Activated CD4-positive, alpha-beta T cell treated with anti-CD3 and anti-CD28 coated beads, Interleukin-2, amount 10 ng/mL, durations not matched to agents 24 days and 14 days (primary cell): ENCODE measurements at regions of chr3 and their contacts with region 1.

Region 1: DNA sequence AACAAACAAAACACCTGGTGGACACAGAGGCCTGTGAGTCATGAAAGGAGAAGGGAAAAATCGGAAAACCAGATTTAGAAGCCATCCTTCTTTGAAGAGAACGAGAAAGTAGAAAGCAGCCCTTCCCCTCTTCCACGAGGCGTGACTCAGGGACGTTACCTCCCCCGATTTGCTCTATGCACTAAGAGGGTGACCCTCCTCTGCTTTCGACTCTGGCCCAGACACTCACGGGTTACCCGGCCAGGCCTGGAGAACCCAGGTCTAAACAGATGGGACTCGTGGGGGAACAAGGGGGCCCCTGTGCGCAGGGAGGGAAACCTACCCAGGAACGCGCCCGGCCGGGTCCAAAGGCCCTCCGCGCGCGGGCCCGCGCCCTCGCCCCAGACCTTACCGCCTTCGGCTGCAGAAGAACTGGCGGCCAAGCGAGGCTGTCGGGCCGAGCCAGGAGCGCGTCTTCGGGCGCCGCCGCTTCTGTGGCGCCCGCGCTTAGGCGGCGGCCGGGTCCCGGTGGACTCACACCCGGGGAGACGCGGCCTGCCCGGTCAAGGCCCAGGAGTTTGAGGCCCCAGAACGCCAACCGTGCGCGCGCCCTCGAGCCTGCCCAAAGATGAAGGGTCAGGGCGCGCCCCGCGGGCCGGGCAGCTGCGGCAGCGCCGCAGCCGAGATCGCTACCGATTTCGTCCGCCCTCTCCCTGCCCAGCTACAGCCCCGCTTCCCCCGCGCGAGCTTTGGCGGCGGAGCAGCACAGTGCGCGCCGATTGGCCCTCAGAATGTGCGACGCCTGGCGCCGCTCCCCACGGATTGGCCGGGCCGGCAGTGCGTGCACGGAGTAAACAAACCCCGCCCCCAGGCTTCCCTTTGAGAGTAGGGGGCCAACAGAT is at the start of gene TFDP2:
- DNase-seq: peak; percentile 97
- H3K4me3 Mint-ChIP-seq: peak within 1 kb of the TSS; percentile 83
- H3K27ac Mint-ChIP-seq: peak within 1 kb of the TSS; percentile 73
- H3K4me1 Mint-ChIP-seq: peaks cover 16% of the 10 kb centered on the region
- H3K27me3 Mint-ChIP-seq: peaks cover 4% of the 10 kb centered on the region
- total RNA-seq, gene TFDP2: 22.0 and 22.1 TPM in 2 replicates

Region 2: DNA sequence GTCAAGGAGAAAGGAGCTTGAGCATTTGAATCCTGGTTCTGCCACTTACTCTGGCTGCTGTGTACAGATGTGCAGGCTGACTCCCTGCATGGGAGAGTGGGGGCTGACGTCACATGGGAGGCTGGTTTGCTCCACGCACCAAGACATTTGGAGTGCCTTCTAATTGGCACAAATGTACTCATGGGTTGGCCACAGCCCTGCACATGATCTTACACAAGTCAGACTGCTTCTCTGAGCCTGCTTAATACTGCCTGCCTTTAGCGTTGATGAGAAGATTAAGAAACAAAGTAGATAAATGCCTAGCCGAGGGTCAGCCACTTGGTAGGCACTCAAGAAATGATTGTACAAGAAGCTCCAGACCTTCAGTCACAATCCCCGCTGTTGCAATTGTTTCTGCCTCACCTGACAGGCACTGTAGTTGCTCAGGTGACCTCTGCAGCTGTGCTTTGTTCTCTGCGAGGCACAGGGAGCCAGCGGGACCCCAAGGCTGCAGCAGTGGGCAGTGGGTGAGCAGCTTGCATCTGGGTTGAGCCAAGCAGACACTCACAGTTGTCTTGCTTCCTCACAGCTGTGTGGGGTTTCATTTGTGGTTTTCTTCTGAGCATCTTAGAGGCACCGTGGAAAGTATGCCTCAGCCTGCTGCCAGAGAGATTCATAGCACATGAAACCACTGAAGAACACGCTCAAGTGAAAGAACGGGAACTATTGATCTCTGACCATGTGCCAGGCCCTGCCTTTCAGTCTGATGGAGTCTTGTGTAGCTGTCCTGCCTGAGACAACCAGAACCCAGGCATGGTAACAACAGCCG is 352.7 kb before region 1 on chr3:
- intact Hi-C with region 1: loop called (anchors 5 kb)
- DNase-seq: peak; percentile 92
- H3K4me3 Mint-ChIP-seq: peak overlapping the region; percentile 84
- H3K27ac Mint-ChIP-seq: peak overlapping the region; percentile 100
- H3K4me1 Mint-ChIP-seq: peaks cover 44% of the 10 kb centered on the region
- H3K27me3 Mint-ChIP-seq: no peaks in the 10 kb centered on the region

Region 3: DNA sequence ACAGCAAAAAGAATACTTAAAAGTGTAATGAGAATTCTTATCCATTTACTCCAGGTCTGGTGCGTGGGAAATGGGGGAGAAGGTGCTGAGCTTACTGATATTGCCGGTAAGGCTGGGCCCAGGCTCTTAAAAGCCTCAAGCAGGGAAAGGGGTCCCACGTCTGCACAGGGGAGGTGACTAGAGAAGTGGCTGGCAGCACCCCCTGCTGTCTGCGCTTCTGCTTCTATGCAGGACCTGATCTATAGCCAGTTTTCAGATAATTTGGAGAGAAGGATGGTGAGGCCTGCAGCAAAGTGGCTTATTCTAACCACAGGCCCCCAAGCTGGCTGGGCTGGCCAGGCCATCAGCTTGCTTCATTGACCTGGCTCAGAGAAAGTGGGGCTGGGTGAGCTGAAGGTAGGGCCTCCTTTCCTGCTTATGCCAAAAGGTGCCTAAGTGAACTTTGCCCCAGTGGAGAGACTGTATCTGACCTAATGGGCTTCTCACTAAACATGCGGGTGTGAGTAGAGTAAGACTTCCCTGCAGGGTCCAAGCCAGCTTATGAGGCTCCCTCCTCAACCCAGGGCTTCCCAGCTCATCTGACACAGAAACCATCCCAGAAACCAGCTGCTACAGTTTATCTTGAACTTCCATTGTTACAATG is 303.5 kb before region 1 on chr3:
- intact Hi-C with region 1: no loop called
- DNase-seq: peak; percentile 61
- H3K4me3 Mint-ChIP-seq: no peak overlapping the region
- H3K27ac Mint-ChIP-seq: no peak overlapping the region
- H3K4me1 Mint-ChIP-seq: peaks cover 11% of the 10 kb centered on the region
- H3K27me3 Mint-ChIP-seq: no peaks in the 10 kb centered on the region

Region 4: GRCh38 chr3:142028243-142028777 is 120.7 kb before region 1 on chr3:
- intact Hi-C with region 1: loop called (anchors 5 kb)
- DNase-seq: peak; percentile 84
- H3K4me3 Mint-ChIP-seq: peak overlapping the region; percentile 87
- H3K27ac Mint-ChIP-seq: peak overlapping the region; percentile 59
- H3K4me1 Mint-ChIP-seq: peaks cover 13% of the 10 kb centered on the region
- H3K27me3 Mint-ChIP-seq: no peaks in the 10 kb centered on the region

Region 5: DNA sequence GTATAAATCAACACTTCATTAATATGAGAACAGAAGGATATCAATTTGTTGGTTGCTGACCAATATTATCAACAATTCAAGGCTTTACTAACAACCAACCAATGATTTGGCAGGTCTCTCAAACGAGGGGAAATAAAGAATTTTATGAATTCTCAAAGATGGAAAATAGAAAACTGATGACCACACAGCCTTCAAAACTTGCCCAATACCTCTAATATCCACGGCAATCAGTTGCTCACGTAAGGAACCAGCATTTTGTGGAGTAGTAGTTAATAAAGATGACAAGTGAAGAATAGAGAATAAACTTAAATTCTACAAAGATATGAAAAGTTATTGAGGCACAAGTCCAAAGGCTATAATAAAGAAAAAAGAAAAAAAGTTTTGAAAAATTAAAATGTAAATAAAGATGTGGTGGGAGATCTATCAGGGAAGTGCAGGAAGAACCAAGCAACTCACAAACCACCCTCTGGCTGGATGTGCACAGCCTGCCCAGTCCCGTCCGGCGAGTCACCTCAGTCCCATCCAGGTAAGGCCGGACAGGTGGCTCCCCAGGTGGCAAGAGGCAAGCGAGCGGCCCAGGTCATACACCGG is 75.5 kb after region 1 on chr3:
- intact Hi-C with region 1: loop called (anchors 1 kb)
- DNase-seq: no peak
- H3K4me3 Mint-ChIP-seq: peak overlapping the region; percentile 95
- H3K27ac Mint-ChIP-seq: peak overlapping the region; percentile 53
- H3K4me1 Mint-ChIP-seq: peaks cover 10% of the 10 kb centered on the region
- H3K27me3 Mint-ChIP-seq: no peaks in the 10 kb centered on the region

Region 6: GRCh38 chr3:142270407-142270806 is 121.4 kb after region 1 on chr3:
- intact Hi-C with region 1: loop called (anchors 5 kb)
- DNase-seq: peak; percentile 82
- H3K4me3 Mint-ChIP-seq: peak overlapping the region; percentile 41
- H3K27ac Mint-ChIP-seq: peak overlapping the region; percentile 88
- H3K4me1 Mint-ChIP-seq: peaks cover 15% of the 10 kb centered on the region
- H3K27me3 Mint-ChIP-seq: no peaks in the 10 kb centered on the region

Region 7: DNA sequence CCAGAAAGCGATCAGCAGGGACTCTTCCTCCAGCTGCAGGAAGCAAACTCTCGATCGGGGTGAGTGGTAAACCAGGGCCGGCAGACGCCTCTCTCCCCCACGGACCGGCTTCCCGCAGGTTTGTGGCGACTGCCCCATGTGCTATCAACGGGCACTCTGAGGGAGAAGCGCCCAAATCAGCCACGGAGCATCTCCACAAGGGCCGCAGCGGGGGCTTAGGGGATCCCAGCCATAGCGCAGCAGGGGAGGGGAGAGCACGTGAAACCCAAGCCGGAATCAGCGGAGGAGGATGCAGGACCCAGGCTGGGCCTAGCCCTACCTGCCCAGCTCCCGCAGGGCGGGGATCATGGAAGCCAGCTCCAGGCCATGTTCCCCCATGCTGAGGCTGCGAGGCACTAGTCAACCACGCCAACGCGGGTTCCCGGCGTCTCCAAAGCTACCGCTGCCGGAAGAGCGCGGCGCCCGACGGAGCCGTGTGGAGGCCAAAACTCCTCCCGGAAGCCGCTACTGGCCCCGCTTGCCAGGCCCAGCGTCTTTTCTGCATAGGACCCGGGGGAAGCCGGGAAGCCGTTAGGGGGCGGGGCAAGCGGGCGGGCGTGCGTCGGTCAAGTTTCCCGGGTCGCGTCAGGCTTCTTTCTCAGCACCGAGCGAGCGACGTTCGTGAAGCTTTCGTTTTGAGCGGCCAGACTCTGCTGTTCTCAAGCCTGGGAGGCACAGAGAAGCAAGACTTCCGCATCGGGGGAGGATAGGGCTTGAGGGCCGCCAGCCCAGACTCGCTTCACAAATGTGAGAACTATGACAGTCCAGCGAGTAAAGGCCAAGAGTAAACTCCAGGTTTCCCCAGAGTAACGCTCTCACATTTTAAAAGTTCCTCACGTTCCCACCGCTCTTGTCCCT is 429.5 kb after region 1 on chr3 and contains the start of gene ATR:
- intact Hi-C with region 1: loop called (anchors 5 kb)
- DNase-seq: peak; percentile 99
- H3K4me3 Mint-ChIP-seq: peak within 1 kb of the TSS; percentile 99
- H3K27ac Mint-ChIP-seq: peak within 1 kb of the TSS; percentile 99
- H3K4me1 Mint-ChIP-seq: peaks cover 42% of the 10 kb centered on the region
- H3K27me3 Mint-ChIP-seq: peaks cover 15% of the 10 kb centered on the region
- total RNA-seq, gene ATR: 34.2 and 35.0 TPM in 2 replicates